CD4-positive, alpha-beta memory T cell (primary cell): ENCODE measurements at regions of chr11 and their contacts with region 1.

Region 1: GRCh38 chr11:65506770-65507505 is 8.1 kb downstream of the MALAT1 start:
- DNase-seq: peak in 3 of 5 donors; percentile 40 to 72 (median 52)
- H3K4me3 ChIP-seq: no peak overlapping the region
- H3K4me3 Mint-ChIP-seq: no peak overlapping the region
- H3K27ac ChIP-seq: peak overlapping the region; percentile 35
- H3K27ac Mint-ChIP-seq: peak overlapping the region in 6 of 7 donors; percentile 84 to 96 (median 93)
- H3K4me1 ChIP-seq: peaks cover 52% of the 10 kb centered on the region
- H3K4me1 Mint-ChIP-seq: peaks cover 35 to 64% (median 50%) of the 10 kb centered on the region in 4 donors
- H3K27me3 ChIP-seq: no peaks in the 10 kb centered on the region
- H3K27me3 Mint-ChIP-seq: no peaks in the 10 kb centered on the region

Region 2: DNA sequence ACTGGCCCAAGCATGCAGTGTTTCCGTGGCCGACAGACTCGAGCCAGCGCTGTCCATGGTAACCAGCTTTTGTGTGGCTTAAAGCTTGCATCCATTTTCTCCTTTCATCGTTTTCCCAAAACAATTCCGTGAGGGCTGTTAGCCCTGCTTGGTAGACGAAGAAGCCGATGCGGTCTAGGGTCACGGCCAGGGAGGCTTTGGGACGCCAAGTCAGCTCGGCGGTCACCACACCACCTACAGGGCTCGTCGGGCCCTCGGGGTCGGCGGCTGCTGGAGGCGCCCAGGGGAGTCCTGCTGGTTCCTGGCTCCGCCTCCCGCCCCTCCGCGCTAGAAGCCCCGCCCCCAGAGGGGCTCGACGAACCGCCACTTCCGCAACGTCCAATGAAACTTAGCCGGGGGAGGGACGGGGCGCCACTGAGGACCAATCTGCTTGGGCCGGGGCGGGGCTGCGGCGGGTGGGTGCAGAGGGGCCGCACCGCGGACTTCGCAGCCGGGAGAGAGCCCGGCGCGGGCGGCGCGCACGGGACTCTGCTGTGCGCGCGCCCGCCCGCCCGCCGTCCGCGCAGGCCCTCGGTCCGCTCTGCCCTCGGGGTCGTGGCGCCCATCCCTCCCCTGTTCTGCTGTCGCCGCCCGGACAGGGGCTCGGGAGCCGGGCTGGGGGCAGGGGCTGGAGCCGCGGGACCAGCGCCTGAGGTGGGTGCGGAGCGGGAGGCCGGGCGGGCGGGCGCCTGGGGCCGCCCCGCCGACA is 152.5 kb before region 1 on chr11 and contains the start of gene TIGD3:
- CTCF ChIA-PET with region 1: interaction called, 3 read pairs
- POLR2A ChIA-PET with region 1: interaction called, 10 read pairs
- intact Hi-C with region 1: no loop called
- DNase-seq: peak; percentile 92 to 97 (median 94)
- H3K4me3 ChIP-seq: peak within 1 kb of the TSS in 1 of 2 donors; percentile 32
- H3K4me3 Mint-ChIP-seq: peak within 1 kb of the TSS; percentile 90 to 97 (median 93)
- H3K27ac ChIP-seq: peak within 1 kb of the TSS; percentile 50
- H3K27ac Mint-ChIP-seq: peak within 1 kb of the TSS; percentile 82 to 96 (median 88)
- H3K4me1 ChIP-seq: peaks cover 7% of the 10 kb centered on the region
- H3K4me1 Mint-ChIP-seq: peaks cover 8 to 17% (median 11%) of the 10 kb centered on the region in 4 donors
- H3K27me3 ChIP-seq: no peaks in the 10 kb centered on the region
- H3K27me3 Mint-ChIP-seq: no peaks in the 10 kb centered on the region
- total RNA-seq, gene TIGD3: 0.96 to 1.1 TPM

Region 3: GRCh38 chr11:65418711-65419459 is 88.1 kb before region 1 on chr11:
- CTCF ChIA-PET with region 1: interaction called, 192 read pairs
- POLR2A ChIA-PET with region 1: interaction called, 3,839 read pairs
- intact Hi-C with region 1: loop called (anchors 1 kb)
- DNase-seq: peak; percentile 64 to 87 (median 70)
- H3K4me3 ChIP-seq: peak overlapping the region; percentile 86 to 95
- H3K4me3 Mint-ChIP-seq: peak overlapping the region; percentile 92 to 97 (median 95)
- H3K27ac ChIP-seq: peak overlapping the region; percentile 98
- H3K27ac Mint-ChIP-seq: peak overlapping the region; percentile 93 to 100 (median 97)
- H3K4me1 ChIP-seq: peaks cover 57% of the 10 kb centered on the region
- H3K4me1 Mint-ChIP-seq: peaks cover 30 to 72% (median 42%) of the 10 kb centered on the region in 4 donors
- H3K27me3 ChIP-seq: no peaks in the 10 kb centered on the region
- H3K27me3 Mint-ChIP-seq: peaks cover 0 to 4% of the 10 kb centered on the region in 2 donors

Region 4: GRCh38 chr11:65454696-65455456 is 52.1 kb before region 1 on chr11:
- CTCF ChIA-PET with region 1: no interaction called
- POLR2A ChIA-PET with region 1: interaction called, 1,536 read pairs
- intact Hi-C with region 1: no loop called
- DNase-seq: peak; percentile 55 to 76 (median 64)
- H3K4me3 ChIP-seq: peak overlapping the region; percentile 78 to 84
- H3K4me3 Mint-ChIP-seq: peak overlapping the region; percentile 85 to 91 (median 88)
- H3K27ac ChIP-seq: peak overlapping the region; percentile 64
- H3K27ac Mint-ChIP-seq: peak overlapping the region; percentile 84 to 97 (median 89)
- H3K4me1 ChIP-seq: peaks cover 12% of the 10 kb centered on the region
- H3K4me1 Mint-ChIP-seq: peaks cover 11 to 34% (median 16%) of the 10 kb centered on the region in 4 donors
- H3K27me3 ChIP-seq: no peaks in the 10 kb centered on the region
- H3K27me3 Mint-ChIP-seq: no peaks in the 10 kb centered on the region

Region 5: DNA sequence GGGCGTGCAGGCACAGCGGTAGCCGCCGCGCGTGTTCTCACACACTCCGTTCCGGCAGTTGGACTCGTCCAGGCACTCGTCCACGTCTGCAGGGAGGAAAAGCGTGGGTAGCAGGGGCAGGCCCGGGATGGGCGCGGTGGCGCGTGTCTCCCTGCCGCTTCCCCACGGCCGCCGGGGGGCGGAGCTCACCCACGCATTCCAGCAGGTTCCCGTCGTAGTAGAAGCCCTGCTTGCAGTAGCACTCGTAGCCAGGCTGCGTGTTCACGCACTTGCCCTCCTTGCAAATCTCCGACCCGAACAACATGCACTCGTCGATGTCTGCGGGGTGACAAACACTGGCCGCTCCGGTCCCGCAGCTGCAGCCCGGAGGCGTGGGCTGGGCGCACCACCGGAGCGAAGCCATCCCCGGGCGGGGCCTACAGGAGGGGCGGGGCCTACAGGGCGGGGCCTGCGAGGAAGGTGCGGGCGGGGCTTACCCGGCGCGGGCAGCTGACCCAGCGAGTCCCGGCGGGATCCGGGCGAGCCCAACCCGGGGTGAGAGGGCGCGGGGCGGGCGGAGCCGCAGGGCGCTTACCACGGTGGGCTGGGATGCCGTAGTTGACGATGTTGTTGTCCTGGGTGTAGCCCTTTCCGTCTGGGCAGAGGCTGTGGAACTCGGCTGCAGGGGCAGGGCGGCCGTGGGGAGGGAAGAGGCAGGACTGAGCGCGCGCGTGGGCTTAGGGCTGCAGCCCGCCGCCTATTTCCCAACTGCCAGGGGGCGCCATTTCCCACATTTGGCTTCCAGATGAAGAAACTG is 33.6 kb after region 1 on chr11:
- CTCF ChIA-PET with region 1: interaction called, 3 read pairs
- POLR2A ChIA-PET with region 1: interaction called, 11 read pairs
- intact Hi-C with region 1: no loop called
- DNase-seq: peak; percentile 90 to 95 (median 91)
- H3K4me3 ChIP-seq: peak overlapping the region; percentile 73 to 91
- H3K4me3 Mint-ChIP-seq: peak overlapping the region; percentile 82 to 90 (median 87)
- H3K27ac ChIP-seq: peak overlapping the region; percentile 55
- H3K27ac Mint-ChIP-seq: peak overlapping the region; percentile 81 to 95 (median 87)
- H3K4me1 ChIP-seq: peaks cover 17% of the 10 kb centered on the region
- H3K4me1 Mint-ChIP-seq: peaks cover 12 to 36% (median 16%) of the 10 kb centered on the region in 4 donors
- H3K27me3 ChIP-seq: no peaks in the 10 kb centered on the region
- H3K27me3 Mint-ChIP-seq: no peaks in the 10 kb centered on the region